ENCODE measurements at regions of chr10 and their contacts with region 1.

Region 1: DNA sequence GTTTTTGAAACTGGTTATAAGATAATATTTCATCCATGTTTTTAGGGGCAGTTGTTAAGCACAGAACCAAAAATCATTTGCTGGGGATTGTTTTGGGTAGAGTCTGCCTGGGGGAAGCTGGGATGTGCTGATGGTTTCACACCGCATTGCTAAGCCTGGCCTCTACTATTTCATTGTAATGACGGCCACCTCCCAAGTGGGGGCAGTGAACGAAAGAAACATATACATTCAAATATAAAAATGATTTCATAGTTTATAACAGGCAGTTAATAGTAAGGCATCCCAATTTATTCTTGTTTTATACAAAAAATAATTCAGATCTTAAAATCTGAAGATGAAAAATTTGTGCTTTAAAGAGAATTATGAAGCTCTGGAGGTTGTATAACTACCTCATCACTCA is 750.8 kb downstream of the REEP3 start:
- DNase-seq: no peak
- H3K4me3 ChIP-seq: no peak overlapping the region
- H3K27ac ChIP-seq: no peak overlapping the region
- H3K4me1 ChIP-seq: no peaks in the 10 kb centered on the region
- H3K27me3 ChIP-seq: peaks cover 0 to 1% (median 0%) of the 10 kb centered on the region in 4 experiments; a peak in 1 of 7 replicates
- CTCF ChIP-seq: peak in 2 of 3 experiments; percentile 22; a peak in 2 of 4 replicates
- EP300 ChIP-seq: no peak
- POLR2A ChIP-seq: no peak
- RAD21 ChIP-seq: peak; percentile 12 to 25; a peak in 1 of 4 replicates

Region 2: DNA sequence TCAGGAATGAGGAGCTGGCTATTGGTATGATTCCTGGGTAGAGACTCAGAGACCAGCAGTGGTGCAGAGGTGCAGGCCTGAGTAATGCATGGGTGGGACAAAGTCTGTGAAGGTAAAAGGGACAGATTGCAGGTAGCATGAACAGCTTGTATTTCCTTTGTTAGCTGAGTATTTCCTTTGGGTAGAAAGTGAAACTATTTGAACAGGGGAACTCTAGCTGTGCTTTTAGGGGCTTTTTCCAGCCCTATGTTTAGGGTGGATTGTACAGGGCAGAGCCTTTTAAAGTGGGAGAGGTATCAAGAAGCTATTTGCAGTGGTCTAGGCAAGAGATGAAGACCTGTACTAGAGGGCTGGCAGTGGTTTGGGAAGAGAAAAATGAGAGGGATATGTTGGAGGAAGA is 10.9 kb before region 1 on chr10:
- CTCF ChIA-PET with region 1: interaction called, 30 read pairs
- POLR2A ChIA-PET with region 1: no interaction called
- DNase-seq: no peak
- H3K4me3 ChIP-seq: no peak overlapping the region
- H3K27ac ChIP-seq: no peak overlapping the region
- H3K4me1 ChIP-seq: no peaks in the 10 kb centered on the region
- H3K27me3 ChIP-seq: no peaks in the 10 kb centered on the region
- CTCF ChIP-seq: no peak
- EP300 ChIP-seq: no peak
- POLR2A ChIP-seq: no peak
- RAD21 ChIP-seq: no peak